Colonic mucosa (tissue), 4 donors: ENCODE measurements at regions of chr6 and their contacts with region 1.

Region 1: DNA sequence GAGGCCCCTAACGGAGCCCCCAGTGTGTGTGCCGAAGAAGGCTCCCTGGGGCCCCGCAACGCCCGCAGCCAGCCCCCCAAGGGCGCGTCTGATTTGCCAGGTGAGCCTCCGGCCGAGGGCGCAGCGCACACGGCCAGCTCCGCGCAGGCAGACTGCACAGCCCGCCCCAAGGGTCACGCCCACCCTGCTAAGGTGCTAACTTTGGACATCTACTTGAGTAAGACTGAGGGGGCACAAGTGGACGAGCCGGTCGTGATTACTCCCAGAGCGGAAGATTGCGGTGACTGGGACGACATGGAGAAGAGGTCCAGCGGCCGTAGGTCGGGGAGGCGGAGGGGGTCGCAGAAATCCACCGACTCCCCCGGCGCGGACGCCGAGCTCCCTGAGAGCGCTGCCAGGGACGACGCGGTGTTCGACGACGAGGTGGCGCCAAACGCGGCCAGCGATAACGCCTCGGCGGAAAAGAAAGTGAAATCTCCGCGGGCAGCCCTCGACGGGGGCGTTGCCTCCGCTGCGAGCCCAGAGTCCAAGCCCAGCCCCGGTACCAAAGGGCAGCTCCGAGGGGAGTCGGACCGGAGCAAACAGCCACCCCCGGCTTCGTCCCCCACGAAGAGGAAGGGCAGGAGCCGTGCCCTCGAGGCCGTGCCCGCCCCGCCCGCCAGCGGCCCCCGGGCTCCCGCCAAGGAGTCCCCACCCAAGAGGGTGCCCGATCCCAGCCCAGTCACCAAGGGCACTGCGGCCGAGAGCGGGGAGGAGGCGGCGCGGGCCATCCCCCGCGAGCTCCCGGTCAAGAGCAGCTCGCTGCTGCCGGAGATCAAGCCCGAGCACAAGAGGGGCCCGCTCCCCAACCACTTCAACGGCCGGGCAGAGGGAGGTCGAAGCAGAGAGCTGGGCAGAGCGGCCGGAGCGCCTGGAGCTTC is 117.0 kb downstream of the RTN4IP1 start:
- DNase-seq: peak; percentile 89
- H3K4me3 ChIP-seq: peak overlapping the region; percentile 70
- H3K27ac ChIP-seq: peak overlapping the region; percentile 91
- H3K4me1 ChIP-seq: no peaks in the 10 kb centered on the region
- H3K27me3 ChIP-seq: no peaks in the 10 kb centered on the region
- CTCF ChIP-seq: no peak

Region 2: GRCh38 chr6:106456756-106457155 is 55.6 kb before region 1 on chr6:
- intact Hi-C with region 1: loop called (anchors 5 kb)
- DNase-seq: no peak
- H3K4me3 ChIP-seq: no peak overlapping the region
- H3K27ac ChIP-seq: no peak overlapping the region
- H3K4me1 ChIP-seq: no peaks in the 10 kb centered on the region
- H3K27me3 ChIP-seq: no peaks in the 10 kb centered on the region
- CTCF ChIP-seq: no peak

Region 3: DNA sequence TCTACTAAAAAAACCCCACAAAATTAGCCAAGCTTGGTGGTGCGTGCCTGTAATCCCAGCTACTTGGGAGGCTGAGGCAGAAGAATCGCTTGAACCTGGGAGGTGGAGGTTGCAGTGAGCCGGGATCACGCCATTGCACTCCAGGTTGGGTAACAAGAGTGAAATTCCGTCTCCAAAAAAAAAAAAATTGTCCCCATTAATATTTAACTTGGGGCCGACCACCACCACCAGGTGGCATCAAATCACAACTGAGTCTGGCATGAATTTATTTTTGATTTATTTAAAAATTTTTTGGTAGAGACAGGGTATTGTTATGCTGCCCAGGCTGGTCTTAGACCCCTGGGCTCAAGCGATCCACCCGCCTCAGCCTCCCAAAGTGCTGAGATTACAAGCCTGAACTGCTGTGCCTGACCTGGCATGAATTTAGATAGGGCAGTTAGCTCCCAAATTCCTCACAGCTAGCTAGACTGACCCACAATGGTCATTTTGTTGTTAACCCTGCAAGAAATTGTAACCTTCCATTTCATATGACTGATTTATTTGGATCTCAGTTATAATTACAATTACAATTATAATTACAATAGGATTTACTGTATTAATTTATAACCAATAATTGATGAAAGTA is 620.1 kb after region 1 on chr6:
- intact Hi-C with region 1: no loop called
- DNase-seq: no peak
- H3K4me3 ChIP-seq: no peak overlapping the region
- H3K27ac ChIP-seq: no peak overlapping the region
- H3K4me1 ChIP-seq: no peaks in the 10 kb centered on the region
- H3K27me3 ChIP-seq: no peaks in the 10 kb centered on the region
- CTCF ChIP-seq: peak; percentile 18